Psoas muscle (tissue), 8 donors: ENCODE measurements at regions of chr17 and their contacts with region 1.

Region 1: DNA sequence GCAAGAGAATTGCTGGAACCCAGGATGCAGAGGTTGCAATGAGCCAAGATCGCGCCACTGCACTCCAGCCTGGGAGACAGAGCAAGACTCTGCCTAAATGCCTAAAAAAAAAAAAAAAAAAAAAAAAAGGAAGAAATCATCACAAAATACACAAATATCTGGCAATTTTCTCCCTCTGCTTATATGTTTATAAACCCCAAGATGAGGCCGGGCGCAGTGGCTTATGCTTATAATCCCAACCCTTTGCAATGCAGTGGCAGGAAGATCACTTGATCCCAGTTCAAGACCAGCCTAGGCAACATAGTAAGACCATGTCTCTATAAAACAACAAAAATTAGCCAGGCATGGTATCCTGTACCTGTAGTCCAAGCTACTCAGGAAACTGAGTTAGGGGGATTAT is 21.5 kb downstream of the MED1 start:
- DNase-seq: peak in 1 of 2 donors; percentile 12
- ATAC-seq: no peak
- H3K4me3 ChIP-seq: no peak overlapping the region
- H3K27ac ChIP-seq: no peak overlapping the region
- H3K4me1 ChIP-seq: no peaks in the 10 kb centered on the region
- H3K27me3 ChIP-seq: no peaks in the 10 kb centered on the region
- CTCF ChIP-seq: no peak

Region 2: DNA sequence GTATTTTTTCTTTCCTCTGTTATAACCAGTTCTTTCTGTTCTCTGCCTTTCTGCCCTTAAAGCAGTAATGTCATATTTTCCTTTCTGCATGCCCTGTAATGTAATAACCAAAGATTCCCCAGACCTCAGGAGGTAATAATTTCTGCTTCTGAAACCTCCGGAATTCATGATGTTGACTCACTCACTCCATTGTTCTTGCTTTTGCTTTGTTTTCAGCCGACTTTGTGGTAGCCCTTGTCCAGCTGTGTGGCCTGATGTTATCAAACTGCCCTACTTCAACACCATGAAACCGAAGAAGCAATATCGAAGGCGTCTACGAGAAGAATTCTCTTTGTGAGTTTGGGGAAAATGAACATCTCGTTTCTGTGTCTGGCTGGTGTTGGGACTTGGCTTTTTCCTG is 87.6 kb after region 1 on chr17:
- intact Hi-C with region 1: loop called in 1 of 2 experiments (anchors 10 kb)
- DNase-seq: no peak
- ATAC-seq: no peak
- H3K4me3 ChIP-seq: no peak overlapping the region
- H3K27ac ChIP-seq: no peak overlapping the region
- H3K4me1 ChIP-seq: no peaks in the 10 kb centered on the region
- H3K27me3 ChIP-seq: no peaks in the 10 kb centered on the region
- CTCF ChIP-seq: no peak